H1 (cell line): ENCODE measurements at regions of chr1 and their contacts with region 1.

Region 1: DNA sequence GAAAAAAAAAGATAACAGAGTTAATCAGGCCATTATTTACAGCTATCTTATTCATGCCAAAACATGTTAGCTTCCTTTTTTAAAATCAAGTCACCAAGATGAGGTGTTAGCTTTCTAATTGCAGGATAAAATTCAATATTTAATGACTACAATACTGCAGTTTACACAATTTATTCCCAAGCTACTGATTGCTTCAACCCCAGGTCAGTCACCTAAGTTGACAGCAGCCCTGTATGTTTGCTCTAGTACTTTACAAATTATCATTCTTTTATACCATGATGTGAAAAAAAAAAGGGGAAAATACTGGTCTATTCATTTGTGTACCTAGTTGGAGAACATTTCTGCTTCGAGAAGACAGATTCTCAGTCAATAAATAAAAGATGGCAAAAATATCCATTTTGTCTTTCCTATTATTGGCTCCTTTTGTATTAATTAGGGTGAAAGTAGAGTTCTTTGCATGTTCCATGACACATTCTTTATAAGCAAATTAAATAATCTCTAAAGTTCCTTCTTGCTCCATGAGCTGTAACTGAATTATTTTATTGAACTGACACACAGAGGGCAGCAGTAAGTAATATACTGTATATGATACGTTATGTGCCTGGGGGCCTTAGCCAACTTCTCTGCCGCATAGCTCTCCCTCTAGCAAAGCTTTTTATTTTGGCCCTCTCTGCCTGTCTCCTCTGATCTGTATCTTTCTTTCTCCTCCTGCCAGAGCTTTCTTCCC is 48.0 kb downstream of the DIPK1A start:
- DNase-seq: no peak
- H3K4me3 ChIP-seq: no peak overlapping the region
- H3K27ac ChIP-seq: no peak overlapping the region
- H3K4me1 ChIP-seq: no peaks in the 10 kb centered on the region
- H3K27me3 ChIP-seq: no peaks in the 10 kb centered on the region
- CTCF ChIP-seq: no peak
- EP300 ChIP-seq: no peak
- POLR2A ChIP-seq: no peak
- RAD21 ChIP-seq: no peak

Region 2: DNA sequence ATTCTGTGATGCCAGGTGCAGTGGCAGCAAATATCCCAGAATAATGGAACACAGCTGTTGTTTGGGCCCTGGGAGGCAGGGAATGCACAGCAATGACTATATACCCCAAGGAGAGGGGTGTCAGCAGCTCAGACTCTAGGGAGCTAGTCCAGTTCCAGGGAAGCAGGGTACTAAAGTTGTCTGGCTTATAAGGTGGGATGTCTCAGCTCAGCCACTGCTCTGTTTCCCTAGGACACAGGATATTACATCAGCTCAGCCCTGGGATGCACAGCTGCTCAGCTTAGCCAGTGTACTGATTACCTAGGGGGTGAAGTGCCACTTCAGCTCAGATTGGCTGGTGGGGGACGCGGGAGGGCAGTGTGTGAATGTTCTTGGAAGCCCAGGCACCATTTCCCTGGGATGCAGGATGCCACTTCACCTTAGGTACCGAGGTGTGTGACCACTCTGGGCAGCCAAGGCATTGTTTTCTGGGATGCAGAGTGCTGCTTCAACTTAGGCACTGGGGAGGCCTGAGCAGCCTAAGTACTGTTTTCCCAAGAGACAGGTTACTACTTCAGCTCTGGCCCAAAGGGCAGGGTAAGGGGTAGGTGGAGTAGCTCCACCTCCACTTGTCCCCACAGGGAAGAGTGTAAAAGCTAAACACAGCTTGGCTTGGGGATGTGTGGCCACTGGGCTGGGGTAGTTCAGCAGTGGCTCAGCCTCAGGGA is 11.4 kb before region 1 on chr1:
- CTCF ChIA-PET with region 1: interaction called, 22 read pairs
- POLR2A ChIA-PET with region 1: no interaction called
- DNase-seq: no peak
- H3K4me3 ChIP-seq: no peak overlapping the region
- H3K27ac ChIP-seq: no peak overlapping the region
- H3K4me1 ChIP-seq: no peaks in the 10 kb centered on the region
- H3K27me3 ChIP-seq: no peaks in the 10 kb centered on the region
- CTCF ChIP-seq: no peak
- EP300 ChIP-seq: no peak
- POLR2A ChIP-seq: no peak
- RAD21 ChIP-seq: no peak